Activated CD4-positive, alpha-beta T cell treated with anti-CD3 and anti-CD28 coated beads for 36 hours (primary cell): ENCODE measurements at regions of chr5 and their contacts with region 1.

Region 1: GRCh38 chr5:115841382-115842088 is at the starts of genes AP3S1 and ATG12:
- DNase-seq: peak; percentile 94
- ATAC-seq: peak; percentile 90
- H3K4me3 Mint-ChIP-seq: peak within 1 kb of the TSS; percentile 93
- H3K27ac Mint-ChIP-seq: peak within 1 kb of the TSS; percentile 99
- H3K4me1 Mint-ChIP-seq: peaks cover 51% of the 10 kb centered on the region
- H3K27me3 Mint-ChIP-seq: no peaks in the 10 kb centered on the region
- total RNA-seq, gene AP3S1: 84.5 to 91.6 TPM
- total RNA-seq, gene ATG12: 44.8 to 45.0 TPM

Region 2: DNA sequence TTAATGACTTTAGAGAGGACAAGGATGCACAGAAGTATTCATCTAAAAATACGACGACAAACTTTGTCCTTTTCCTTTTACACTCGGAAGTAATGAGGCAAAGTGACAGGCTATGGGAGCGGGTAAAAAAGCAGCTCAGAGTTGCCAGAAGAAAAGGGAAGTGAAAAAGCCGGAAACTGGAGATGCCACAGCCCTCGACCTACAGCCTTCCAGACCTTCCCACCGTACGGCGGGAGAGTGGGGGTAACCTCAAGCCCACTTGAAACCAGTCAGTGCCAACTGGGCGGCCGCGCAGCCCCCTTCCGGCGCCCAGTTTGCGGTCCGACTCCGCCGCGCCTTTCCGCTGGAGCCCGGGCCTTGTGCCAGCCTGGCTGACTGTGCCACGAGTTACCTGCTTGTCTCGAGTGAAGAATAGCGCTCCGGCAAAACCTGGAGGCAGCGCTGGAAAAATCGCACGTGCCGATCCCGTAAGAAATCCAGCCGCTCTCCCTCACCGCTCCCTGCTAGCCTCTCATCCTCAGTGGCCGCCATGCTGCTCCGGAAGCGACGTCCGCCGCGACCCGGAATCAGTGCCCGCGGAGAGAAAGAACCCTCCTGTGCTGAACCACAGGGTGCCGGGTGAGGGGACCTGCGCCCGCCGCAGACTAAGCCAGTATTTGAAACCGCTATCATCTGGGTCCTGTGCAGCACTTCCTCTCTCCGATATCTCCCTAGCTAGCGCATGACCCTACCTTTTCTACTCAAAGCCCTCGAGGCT is 579.0 kb before region 1 on chr5 and contains the start of gene PGGT1B:
- CTCF ChIA-PET with region 1: no interaction called
- POLR2A ChIA-PET with region 1: no interaction called
- intact Hi-C with region 1: loop called (anchors 2 kb)
- DNase-seq: peak; percentile 86
- ATAC-seq: peak; percentile 97
- H3K4me3 Mint-ChIP-seq: peak within 1 kb of the TSS; percentile 89
- H3K27ac Mint-ChIP-seq: peak within 1 kb of the TSS; percentile 95
- H3K4me1 Mint-ChIP-seq: peaks cover 45% of the 10 kb centered on the region
- H3K27me3 Mint-ChIP-seq: no peaks in the 10 kb centered on the region
- total RNA-seq, gene PGGT1B: 38.9 to 44.3 TPM

Region 3: DNA sequence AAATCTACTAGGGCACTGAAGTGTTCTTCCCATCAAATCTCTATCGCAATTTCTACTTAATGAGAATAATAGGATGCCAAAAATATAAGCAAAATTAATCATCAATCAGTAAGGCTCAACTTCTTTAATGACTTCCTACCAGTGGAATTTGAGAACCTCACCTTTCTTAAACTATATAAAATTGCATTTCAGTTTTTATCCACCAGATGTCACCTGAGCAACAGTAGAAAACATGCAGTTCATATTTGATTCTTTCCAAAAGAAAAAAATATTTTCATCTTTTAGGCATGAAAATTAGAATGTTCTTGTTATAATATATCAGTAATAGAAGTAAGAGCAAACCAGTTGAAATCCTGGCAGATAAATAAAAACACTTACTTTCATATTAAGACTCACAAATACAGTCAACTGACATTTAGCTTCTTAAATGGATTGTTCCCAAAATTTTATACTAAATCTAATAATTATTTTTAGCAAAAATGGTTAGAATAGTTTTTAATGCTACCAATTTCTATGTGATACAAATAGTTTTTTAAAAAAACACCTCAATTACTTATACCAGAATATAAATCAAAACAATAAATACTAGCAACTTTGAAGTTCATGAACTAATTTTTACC is 531.7 kb before region 1 on chr5:
- CTCF ChIA-PET with region 1: interaction called, 3 read pairs
- POLR2A ChIA-PET with region 1: no interaction called
- intact Hi-C with region 1: loop called (anchors 2 to 5 kb)
- DNase-seq: no peak
- ATAC-seq: no peak
- H3K4me3 Mint-ChIP-seq: no peak overlapping the region
- H3K27ac Mint-ChIP-seq: no peak overlapping the region
- H3K4me1 Mint-ChIP-seq: no peaks in the 10 kb centered on the region
- H3K27me3 Mint-ChIP-seq: peaks cover 25% of the 10 kb centered on the region

Region 4: GRCh38 chr5:115601701-115602590 is 239.6 kb before region 1 on chr5 and contains the start of gene TICAM2:
- CTCF ChIA-PET with region 1: interaction called, 3 read pairs
- POLR2A ChIA-PET with region 1: no interaction called
- intact Hi-C with region 1: loop called in 1 of 2 experiments (anchors 1 kb)
- DNase-seq: peak; percentile 81
- ATAC-seq: peak; percentile 91
- H3K4me3 Mint-ChIP-seq: peak within 1 kb of the TSS; percentile 61
- H3K27ac Mint-ChIP-seq: peak within 1 kb of the TSS; percentile 86
- H3K4me1 Mint-ChIP-seq: peaks cover 37% of the 10 kb centered on the region
- H3K27me3 Mint-ChIP-seq: no peaks in the 10 kb centered on the region
- total RNA-seq, gene TICAM2: 0.87 to 1.7 TPM

Region 5: DNA sequence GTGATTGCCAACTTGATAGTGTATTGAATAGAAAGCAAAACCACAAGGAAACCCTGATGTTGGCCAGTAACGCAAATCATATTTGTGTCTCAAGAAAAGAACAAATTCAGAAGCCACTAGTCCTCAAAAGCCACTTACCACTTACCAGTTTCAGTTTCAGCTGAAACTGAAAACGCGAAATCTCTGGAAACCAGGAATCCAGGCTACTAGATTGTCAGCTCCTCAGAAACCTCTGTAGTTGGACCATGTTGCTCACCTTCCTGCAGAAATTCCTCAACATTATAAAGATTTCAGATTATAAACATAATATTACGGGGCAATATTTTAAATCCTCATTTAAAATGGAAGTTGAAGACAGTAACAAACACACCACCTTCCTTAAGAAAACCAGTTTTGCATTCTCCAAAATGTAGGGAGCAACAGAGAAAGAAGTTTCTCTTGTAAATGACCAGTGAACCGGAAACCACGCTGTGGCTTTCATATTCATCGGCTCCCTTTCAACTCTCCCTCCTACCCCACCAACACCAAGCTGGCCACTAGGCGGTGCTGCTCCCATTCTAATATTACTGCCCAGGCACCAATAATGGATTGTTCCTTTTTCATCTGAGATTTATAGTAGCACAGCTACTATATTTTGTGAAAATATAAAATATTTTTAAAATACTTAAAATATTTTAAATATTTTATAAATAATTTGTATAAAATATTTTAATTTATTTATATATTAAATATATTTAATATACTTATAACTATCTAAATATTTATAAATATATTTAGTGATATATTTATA is 207.0 kb before region 1 on chr5:
- CTCF ChIA-PET with region 1: interaction called, 4 read pairs
- POLR2A ChIA-PET with region 1: interaction called, 3 read pairs
- intact Hi-C with region 1: loop called in 1 of 2 experiments (anchors 1 kb)
- DNase-seq: peak; percentile 91
- ATAC-seq: peak; percentile 52
- H3K4me3 Mint-ChIP-seq: no peak overlapping the region
- H3K27ac Mint-ChIP-seq: no peak overlapping the region
- H3K4me1 Mint-ChIP-seq: peaks cover 37% of the 10 kb centered on the region
- H3K27me3 Mint-ChIP-seq: peaks cover 26% of the 10 kb centered on the region

Region 6: DNA sequence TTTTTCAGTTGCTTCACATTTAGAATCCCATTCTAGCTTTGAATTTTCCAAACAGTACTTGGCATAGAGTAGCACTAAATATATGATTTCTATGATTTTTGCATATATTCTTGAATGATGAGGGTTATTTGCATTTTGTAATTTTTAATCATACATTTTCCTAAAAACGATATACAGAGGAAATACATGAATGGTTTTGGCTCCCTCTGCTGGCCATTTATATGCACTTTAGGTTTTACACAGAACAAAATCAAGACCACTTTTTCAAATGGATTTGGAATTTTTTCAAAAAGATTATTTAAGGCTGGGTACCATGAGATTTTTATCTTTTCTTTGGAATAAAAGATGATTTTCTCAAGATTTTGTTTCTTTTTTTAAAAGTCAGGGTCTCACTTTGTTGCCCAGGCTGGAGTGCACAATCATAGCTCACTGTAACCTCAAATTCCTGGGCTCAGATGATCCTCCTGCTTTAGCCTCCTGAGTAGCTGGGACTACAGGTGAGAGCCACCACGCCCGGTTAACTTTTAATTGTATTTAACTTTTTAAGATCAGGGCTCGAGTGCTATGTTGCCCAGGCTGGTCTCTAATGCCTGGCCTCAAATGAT is 226.6 kb after region 1 on chr5:
- CTCF ChIA-PET with region 1: no interaction called
- POLR2A ChIA-PET with region 1: no interaction called
- intact Hi-C with region 1: loop called (anchors 5 kb)
- DNase-seq: no peak
- ATAC-seq: peak; percentile 44
- H3K4me3 Mint-ChIP-seq: no peak overlapping the region
- H3K27ac Mint-ChIP-seq: no peak overlapping the region
- H3K4me1 Mint-ChIP-seq: no peaks in the 10 kb centered on the region
- H3K27me3 Mint-ChIP-seq: peaks cover 25% of the 10 kb centered on the region